ENCODE measurements at regions of chr19 and their contacts with region 1.

Region 1: GRCh38 chr19:12890787-12891552 is at the start of gene GCDH:
- DNase-seq: peak; percentile 99
- total RNA-seq, gene GCDH: 8.5 to 14.6 TPM

Region 2: DNA sequence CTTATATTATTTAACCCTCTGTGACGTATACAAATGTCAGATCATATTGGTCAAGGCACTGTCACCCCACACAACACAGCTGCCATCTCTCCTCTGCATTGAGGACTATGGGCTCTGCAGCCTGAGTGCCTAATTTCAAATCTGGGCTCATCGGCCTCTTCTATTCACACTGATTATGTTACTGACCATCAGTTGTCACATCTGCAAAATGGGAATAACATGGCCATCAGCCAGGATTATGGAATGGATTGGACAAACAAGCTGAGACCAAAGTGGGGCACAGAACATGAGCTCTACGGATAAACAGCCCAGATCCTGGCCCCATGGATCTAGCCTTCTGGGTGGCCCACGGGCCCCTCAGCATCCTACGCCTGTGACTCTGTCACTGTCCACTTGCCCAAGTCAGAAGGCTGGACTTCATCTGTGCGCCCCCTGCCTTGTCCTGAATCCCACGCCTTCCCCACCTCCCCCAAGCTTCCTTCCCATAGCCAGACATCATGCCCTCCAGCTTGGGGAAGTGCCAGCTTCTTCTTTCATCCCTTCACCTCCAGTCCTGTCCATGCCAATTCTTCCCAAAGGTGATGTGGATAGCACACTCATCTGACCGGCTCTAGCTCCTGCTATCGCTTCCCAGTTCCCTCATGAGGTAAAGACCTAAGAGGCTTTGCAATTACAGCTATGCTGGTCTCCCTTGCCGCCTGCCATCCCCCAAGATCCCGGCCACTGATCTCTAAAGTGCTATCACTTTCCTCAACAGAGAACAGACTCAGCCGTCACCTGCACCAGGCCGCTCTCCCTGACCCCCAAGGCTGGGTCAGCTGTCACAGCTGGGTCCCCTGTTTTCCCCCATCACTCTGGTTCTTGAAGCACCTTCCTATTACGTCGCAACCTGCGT is 41.7 kb after region 1 on chr19:
- intact Hi-C with region 1: loop called in 1 of 2 experiments (anchors 1 kb)
- DNase-seq: no peak

Region 3: DNA sequence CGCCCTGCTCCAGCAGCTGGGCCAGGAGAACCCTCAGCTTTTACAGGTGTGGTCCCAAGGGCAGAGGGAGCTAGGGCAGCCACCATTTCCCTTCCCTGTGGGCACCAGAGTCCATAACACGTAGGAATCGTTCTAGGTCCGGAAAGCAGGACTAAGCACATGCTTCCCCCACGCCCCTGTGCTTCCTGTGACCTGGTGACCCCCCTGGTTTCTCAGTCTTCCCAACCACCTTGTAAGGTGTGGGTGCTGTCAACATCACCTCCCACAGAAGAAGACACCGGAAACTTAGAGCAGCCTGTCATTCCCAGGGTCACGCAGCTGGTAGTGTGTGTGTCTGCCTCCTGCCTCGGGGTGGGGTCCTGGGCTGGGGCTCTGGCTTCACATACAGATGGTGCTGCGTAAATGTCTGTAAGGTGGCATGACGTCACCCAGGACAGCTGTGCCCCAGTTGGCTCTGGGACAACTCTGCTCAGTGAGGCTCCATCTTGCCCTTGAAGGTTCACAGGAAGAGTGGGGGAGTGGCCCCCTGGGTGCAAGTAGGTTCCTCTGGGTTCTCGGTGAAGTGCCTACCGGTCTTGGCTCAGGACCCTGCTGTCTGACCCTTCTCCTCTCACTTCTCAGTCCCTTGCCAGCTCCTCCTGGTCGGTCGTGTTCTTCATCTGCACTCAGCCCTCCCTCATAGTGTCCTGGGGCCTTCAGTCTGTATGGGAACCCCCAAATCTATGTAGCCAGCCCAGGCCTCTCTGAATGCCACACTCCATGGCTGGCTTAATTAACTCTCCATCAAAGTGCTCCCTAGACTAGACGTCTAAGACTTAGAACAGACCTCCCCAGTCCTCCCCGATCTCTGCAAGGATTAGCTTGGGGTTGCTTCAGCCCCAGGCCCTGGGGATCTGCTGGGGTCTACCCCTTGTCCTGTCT is 58.7 kb after region 1 on chr19:
- intact Hi-C with region 1: loop called in 1 of 2 experiments (anchors 2 kb)
- DNase-seq: no peak

Measured in posterior vena cava (tissue), 2 donors.